ENCODE measurements at regions of chr19 and their contacts with region 1.

Region 1: GRCh38 chr19:46016426-46017094 is 6.3 kb downstream of the PGLYRP1 start:
- DNase-seq: peak; percentile 73 to 92 (median 88)
- ATAC-seq: peak; percentile 69 to 88 (median 82)
- H3K4me3 ChIP-seq: peak overlapping the region; percentile 38 to 60 (median 54)
- H3K27ac ChIP-seq: no peak overlapping the region
- H3K4me1 ChIP-seq: peaks cover 0 to 8% (median 3%) of the 10 kb centered on the region in 3 donors
- H3K27me3 ChIP-seq: no peaks in the 10 kb centered on the region
- CTCF ChIP-seq: peak; percentile 78 to 89 (median 88)

Region 2: DNA sequence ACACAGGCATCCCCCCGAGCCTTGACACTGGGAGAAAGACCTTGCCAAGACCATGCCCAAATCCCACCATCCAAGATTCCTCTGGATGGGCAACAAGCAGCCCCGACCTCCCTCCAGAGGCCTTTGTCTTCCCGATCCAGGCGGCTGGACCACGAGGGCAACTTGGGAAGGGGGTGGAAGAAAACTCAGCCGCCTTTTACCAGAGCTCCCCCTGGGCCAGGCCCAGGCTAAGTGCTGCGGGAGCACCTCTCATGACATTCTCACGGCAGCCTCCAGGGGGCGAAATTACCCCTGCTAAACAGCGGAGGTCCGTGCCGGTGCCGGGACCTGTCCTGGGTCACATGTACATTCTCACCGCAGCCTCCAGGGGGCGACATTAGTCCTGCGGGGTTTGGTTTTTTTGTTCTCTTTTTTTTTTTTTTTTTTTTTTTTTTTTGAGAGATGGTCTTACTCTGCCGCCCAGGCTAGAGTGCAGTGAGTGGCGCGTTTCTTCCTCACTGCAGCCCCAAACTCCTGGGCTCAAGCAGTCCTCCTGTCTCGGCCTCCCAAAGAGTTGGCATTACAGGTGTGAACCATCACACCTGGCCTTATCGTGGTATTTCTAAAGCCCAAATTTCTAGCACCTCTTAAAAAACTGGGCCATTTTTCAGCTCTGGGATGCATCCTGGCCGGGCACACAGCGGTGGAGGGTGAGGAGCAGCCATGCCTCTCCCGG is 199.4 kb before region 1 on chr19:
- intact Hi-C with region 1: loop called in 2 of 3 experiments (anchors 5 to 10 kb)
- DNase-seq: peak; percentile 90 to 99 (median 96)
- ATAC-seq: peak; percentile 91 to 97 (median 93)
- H3K4me3 ChIP-seq: no peak overlapping the region
- H3K27ac ChIP-seq: no peak overlapping the region
- H3K4me1 ChIP-seq: no peaks in the 10 kb centered on the region
- H3K27me3 ChIP-seq: no peaks in the 10 kb centered on the region
- CTCF ChIP-seq: peak; percentile 94 to 99 (median 98)

Region 3: GRCh38 chr19:45952686-45953505 is 63.7 kb before region 1 on chr19:
- intact Hi-C with region 1: no loop called
- DNase-seq: peak; percentile 34 to 79 (median 63)
- ATAC-seq: peak; percentile 79 to 96 (median 84)
- H3K4me3 ChIP-seq: peak overlapping the region in 2 of 4 donors; percentile 0 to 35
- H3K27ac ChIP-seq: no peak overlapping the region
- H3K4me1 ChIP-seq: peaks cover 0 to 5% (median 0%) of the 10 kb centered on the region in 3 donors
- H3K27me3 ChIP-seq: peaks cover 0 to 4% (median 0%) of the 10 kb centered on the region in 4 donors
- CTCF ChIP-seq: no peak